Activated CD4-positive, alpha-beta T cell treated with anti-CD3 and anti-CD28 coated beads for 36 hours (primary cell): ENCODE measurements at regions of chr16 and their contacts with region 1.

Region 1: DNA sequence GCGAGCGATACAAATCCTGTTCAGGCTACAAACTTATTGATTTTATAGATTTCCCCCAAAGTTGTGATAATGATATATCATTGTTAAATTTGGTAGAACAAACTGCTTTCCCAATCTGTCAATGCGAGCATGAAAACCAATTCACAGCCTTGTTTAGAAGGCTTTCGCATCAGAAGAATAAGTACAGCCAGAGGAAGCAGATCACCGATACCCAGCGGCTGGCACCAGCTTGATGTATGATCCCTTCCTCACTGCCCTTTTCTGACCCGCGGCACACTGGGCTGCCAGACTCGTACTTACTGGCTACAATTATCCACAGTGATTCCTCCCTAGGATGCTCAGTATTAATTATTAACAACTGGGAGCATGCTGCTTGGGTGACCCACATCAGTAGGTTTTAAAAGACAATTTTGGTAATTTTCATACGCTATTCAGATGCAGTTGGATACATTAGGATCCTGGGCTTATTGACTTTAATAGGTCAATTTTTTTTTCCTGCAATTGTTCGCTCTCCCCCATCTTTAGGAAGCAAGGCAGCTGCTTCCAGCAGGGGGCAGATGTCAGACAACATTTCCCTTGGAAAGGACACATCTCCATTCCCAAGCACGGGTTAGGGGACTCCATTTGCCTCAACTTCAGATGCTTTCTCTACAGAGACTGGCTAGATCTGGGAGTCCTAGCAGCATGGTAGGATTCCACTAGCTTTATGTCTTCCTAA is 582.7 kb upstream of the PSMD7 start:
- DNase-seq: peak; percentile 13
- ATAC-seq: no peak
- H3K4me3 Mint-ChIP-seq: no peak overlapping the region
- H3K27ac Mint-ChIP-seq: no peak overlapping the region
- H3K4me1 Mint-ChIP-seq: no peaks in the 10 kb centered on the region
- H3K27me3 Mint-ChIP-seq: peaks cover 3% of the 10 kb centered on the region

Region 2: GRCh38 chr16:73764321-73764720 is 50.4 kb after region 1 on chr16:
- CTCF ChIA-PET with region 1: no interaction called
- POLR2A ChIA-PET with region 1: no interaction called
- intact Hi-C with region 1: loop called in 1 of 2 experiments (anchors 5 kb)
- DNase-seq: no peak
- ATAC-seq: no peak
- H3K4me3 Mint-ChIP-seq: no peak overlapping the region
- H3K27ac Mint-ChIP-seq: no peak overlapping the region
- H3K4me1 Mint-ChIP-seq: no peaks in the 10 kb centered on the region
- H3K27me3 Mint-ChIP-seq: no peaks in the 10 kb centered on the region